H1 (cell line): ENCODE measurements at regions of chr14 and their contacts with region 1.

Region 1: DNA sequence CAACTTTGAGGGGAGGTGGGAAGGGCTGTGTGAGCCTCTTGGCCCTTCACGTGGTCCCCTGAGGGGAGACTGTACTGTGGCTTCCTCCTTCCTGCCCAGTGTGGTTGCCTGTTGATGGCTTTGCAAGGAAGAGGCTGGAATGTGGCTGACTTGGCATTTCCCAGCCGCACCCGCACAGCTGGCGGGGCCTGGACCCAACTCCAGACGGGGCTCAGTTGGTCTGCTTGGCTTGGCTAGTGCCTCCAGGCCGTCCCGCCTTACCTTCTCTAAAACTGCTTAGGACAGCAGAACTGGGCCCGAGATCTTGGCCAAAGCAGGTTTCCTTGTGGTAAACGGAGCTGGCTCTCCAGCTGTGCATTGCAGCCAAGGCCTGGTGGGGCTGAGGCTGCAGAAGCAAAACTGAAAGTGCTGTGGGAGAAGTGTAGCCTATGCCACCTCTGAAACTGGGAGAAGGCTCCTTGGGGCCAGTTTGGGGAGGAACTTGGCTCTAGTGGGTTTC is 139.5 kb downstream of the SMOC1 start:
- DNase-seq: no peak
- H3K4me3 ChIP-seq: no peak overlapping the region
- H3K27ac ChIP-seq: no peak overlapping the region
- H3K4me1 ChIP-seq: no peaks in the 10 kb centered on the region; a peak in 1 of 7 replicates
- H3K27me3 ChIP-seq: no peaks in the 10 kb centered on the region
- CTCF ChIP-seq: no peak
- EP300 ChIP-seq: no peak
- POLR2A ChIP-seq: no peak
- RAD21 ChIP-seq: no peak

Region 2: DNA sequence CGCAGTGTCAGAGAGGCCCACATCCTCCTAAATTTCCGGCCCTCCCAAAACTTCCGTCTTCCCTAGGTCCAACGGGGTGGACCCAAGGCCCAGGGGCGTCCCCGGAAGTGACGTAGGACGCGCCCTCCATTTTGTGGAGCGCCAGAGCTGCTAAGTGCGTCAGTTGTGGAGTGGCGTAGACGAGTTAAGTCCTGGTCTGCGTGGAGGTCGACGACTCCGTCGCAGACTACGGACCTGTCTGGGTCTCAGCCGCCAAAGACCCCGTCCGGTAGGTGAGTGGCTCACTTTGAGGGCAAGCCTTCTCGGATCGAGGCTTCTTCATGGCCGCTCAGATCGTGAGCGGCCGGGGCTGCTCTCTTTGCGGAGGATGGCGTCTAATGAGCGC is 251.8 kb before region 1 on chr14 and contains the start of gene SRSF5:
- CTCF ChIA-PET with region 1: no interaction called
- POLR2A ChIA-PET with region 1: no interaction called
- DNase-seq: peak; percentile 88 to 95
- H3K4me3 ChIP-seq: peak within 1 kb of the TSS; percentile 95 to 100 (median 98)
- H3K27ac ChIP-seq: peak within 1 kb of the TSS; percentile 99
- H3K4me1 ChIP-seq: peaks cover 0 to 5% (median 3%) of the 10 kb centered on the region in 4 experiments; a peak in 5 of 7 replicates
- H3K27me3 ChIP-seq: no peaks in the 10 kb centered on the region
- CTCF ChIP-seq: no peak
- EP300 ChIP-seq: no peak
- POLR2A ChIP-seq: peak; percentile 99
- RAD21 ChIP-seq: no peak
- total RNA-seq, gene SRSF5: 226 and 238 TPM in 2 replicates

Region 3: DNA sequence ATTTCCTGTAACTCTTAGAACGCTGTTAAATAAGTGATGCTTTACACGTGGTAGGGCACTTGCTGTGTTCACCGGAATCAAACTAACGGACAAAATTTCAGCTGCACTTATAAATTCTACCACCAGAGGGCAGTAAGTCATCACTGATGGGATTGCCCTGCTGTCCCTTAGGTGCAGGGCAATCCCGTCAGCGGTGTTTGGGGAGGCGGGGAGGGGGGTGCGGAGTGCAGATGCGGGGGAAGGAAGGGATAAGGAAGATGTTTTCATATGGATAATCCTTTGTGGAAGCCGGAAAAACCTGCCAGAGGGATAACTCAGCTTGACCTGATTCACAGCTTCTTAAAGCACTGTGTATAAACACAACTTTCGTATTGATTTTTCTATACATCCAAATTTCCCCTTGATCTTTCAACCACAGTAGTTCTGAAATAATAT is 200.0 kb before region 1 on chr14:
- CTCF ChIA-PET with region 1: interaction called, 21 read pairs
- POLR2A ChIA-PET with region 1: interaction called, 3 read pairs
- DNase-seq: peak; percentile 51 to 79
- H3K4me3 ChIP-seq: no peak overlapping the region
- H3K27ac ChIP-seq: no peak overlapping the region
- H3K4me1 ChIP-seq: no peaks in the 10 kb centered on the region
- H3K27me3 ChIP-seq: no peaks in the 10 kb centered on the region
- CTCF ChIP-seq: peak; percentile 44 to 95 (median 81)
- EP300 ChIP-seq: peak in 1 of 2 experiments; percentile 48; a peak in 1 of 3 replicates
- POLR2A ChIP-seq: no peak
- RAD21 ChIP-seq: peak; percentile 98 to 99

Region 4: DNA sequence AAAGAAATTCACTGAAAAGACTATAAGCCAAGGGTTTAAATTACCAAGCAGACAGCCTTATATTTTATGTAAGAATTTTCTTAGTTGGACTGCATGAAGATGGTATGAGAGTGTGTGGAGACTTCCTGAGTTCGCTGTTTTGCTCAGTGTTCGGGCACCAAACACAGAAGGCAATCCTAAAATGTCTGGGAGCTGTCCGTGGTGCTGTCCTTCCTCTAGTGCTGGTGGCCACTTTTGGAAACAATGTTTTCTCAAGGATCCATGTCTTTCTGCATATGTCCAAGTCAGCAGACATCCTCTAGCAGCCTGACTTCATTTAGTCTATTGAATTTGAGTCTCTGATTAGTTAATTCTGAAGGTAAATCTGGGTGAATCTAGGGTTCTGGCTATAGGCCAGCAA is 34.2 kb after region 1 on chr14:
- CTCF ChIA-PET with region 1: no interaction called
- POLR2A ChIA-PET with region 1: no interaction called
- DNase-seq: peak in 1 of 2 experiments; percentile 72
- H3K4me3 ChIP-seq: no peak overlapping the region
- H3K27ac ChIP-seq: no peak overlapping the region
- H3K4me1 ChIP-seq: no peaks in the 10 kb centered on the region
- H3K27me3 ChIP-seq: no peaks in the 10 kb centered on the region
- CTCF ChIP-seq: no peak
- EP300 ChIP-seq: no peak
- POLR2A ChIP-seq: no peak
- RAD21 ChIP-seq: no peak